Naive thymus-derived CD4-positive, alpha-beta T cell (primary cell): ENCODE measurements at regions of chr5 and their contacts with region 1.

Region 1: GRCh38 chr5:171405601-171406005 is 13.8 kb upstream of the FGF18 start:
- DNase-seq: no peak
- ATAC-seq: no peak
- H3K4me3 ChIP-seq: no peak overlapping the region
- H3K4me3 Mint-ChIP-seq: no peak overlapping the region
- H3K27ac ChIP-seq: no peak overlapping the region
- H3K27ac Mint-ChIP-seq: peak overlapping the region in 1 of 9 donors; percentile 32
- H3K4me1 ChIP-seq: no peaks in the 10 kb centered on the region
- H3K4me1 Mint-ChIP-seq: peaks cover 15 to 44% (median 39%) of the 10 kb centered on the region in 7 donors
- H3K27me3 ChIP-seq: no peaks in the 10 kb centered on the region
- H3K27me3 Mint-ChIP-seq: no peaks in the 10 kb centered on the region

Region 2: GRCh38 chr5:171092194-171092593 is 313.4 kb before region 1 on chr5:
- CTCF ChIA-PET with region 1: no interaction called
- POLR2A ChIA-PET with region 1: no interaction called
- intact Hi-C with region 1: no loop called
- DNase-seq: no peak
- ATAC-seq: no peak
- H3K4me3 ChIP-seq: no peak overlapping the region
- H3K4me3 Mint-ChIP-seq: no peak overlapping the region
- H3K27ac ChIP-seq: no peak overlapping the region
- H3K27ac Mint-ChIP-seq: no peak overlapping the region
- H3K4me1 ChIP-seq: no peaks in the 10 kb centered on the region
- H3K4me1 Mint-ChIP-seq: no peaks in the 10 kb centered on the region
- H3K27me3 ChIP-seq: no peaks in the 10 kb centered on the region
- H3K27me3 Mint-ChIP-seq: no peaks in the 10 kb centered on the region

Region 3: DNA sequence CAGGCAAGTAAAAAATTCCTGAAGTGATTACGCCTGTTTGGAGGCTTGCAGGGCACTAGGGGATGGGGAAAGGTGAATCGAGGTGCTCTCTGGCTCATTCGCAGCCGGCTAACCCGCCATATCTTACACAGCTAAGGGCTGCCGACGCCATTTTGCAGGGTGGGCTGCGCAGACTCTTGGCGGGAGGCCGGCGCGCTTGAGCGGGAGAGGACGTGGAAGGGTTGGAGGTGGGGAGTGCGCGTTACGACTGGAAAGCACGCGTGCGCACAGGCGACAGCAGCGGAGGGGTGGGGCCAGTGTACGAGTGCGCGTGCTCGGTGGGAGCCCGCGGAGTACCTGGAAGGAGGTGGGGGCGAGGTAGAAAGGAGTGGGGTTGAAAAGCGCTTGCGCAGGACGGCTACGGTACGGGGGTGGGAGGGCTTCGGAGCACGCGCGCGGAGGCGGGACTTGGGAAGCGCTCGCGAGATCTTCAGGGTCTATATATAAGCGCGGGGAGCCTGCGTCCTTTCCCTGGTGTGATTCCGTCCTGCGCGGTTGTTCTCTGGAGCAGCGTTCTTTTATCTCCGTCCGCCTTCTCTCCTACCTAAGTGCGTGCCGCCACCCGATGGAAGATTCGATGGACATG is 18.1 kb before region 1 on chr5 and contains the start of gene NPM1:
- CTCF ChIA-PET with region 1: no interaction called
- POLR2A ChIA-PET with region 1: interaction called, 3 read pairs
- intact Hi-C with region 1: loop called (anchors 2 kb)
- DNase-seq: peak; percentile 90 to 99 (median 98)
- ATAC-seq: peak; percentile 93
- H3K4me3 ChIP-seq: peak within 1 kb of the TSS; percentile 91
- H3K4me3 Mint-ChIP-seq: peak within 1 kb of the TSS; percentile 92 to 99 (median 98)
- H3K27ac ChIP-seq: peak within 1 kb of the TSS; percentile 88
- H3K27ac Mint-ChIP-seq: peak within 1 kb of the TSS; percentile 96 to 100 (median 98)
- H3K4me1 ChIP-seq: peaks cover 31 to 40% of the 10 kb centered on the region in 2 donors
- H3K4me1 Mint-ChIP-seq: peaks cover 25 to 52% (median 49%) of the 10 kb centered on the region in 7 donors
- H3K27me3 ChIP-seq: no peaks in the 10 kb centered on the region
- H3K27me3 Mint-ChIP-seq: peaks cover 0 to 6% (median 0%) of the 10 kb centered on the region in 5 donors
- total RNA-seq, gene NPM1: 807 to 1,238 (median 1,192) TPM

Region 4: GRCh38 chr5:171392585-171393159 is 12.9 kb before region 1 on chr5:
- CTCF ChIA-PET with region 1: interaction called, 3 read pairs
- POLR2A ChIA-PET with region 1: interaction called, 3 read pairs
- intact Hi-C with region 1: loop called (anchors 2 kb)
- DNase-seq: no peak
- ATAC-seq: no peak
- H3K4me3 ChIP-seq: no peak overlapping the region
- H3K4me3 Mint-ChIP-seq: peak overlapping the region in 4 of 10 donors; percentile 20 to 34 (median 25)
- H3K27ac ChIP-seq: no peak overlapping the region
- H3K27ac Mint-ChIP-seq: peak overlapping the region in 2 of 9 donors; percentile 43 to 49
- H3K4me1 ChIP-seq: peaks cover 31 to 40% of the 10 kb centered on the region in 2 donors
- H3K4me1 Mint-ChIP-seq: peaks cover 50 to 78% (median 71%) of the 10 kb centered on the region in 7 donors
- H3K27me3 ChIP-seq: no peaks in the 10 kb centered on the region
- H3K27me3 Mint-ChIP-seq: peaks cover 0 to 2% (median 0%) of the 10 kb centered on the region in 5 donors